ENCODE measurements at regions of chr1 and their contacts with region 1.

Region 1: GRCh38 chr1:107529502-107530149 is 388.8 kb downstream of the NTNG1 start:
- DNase-seq: peak; percentile 32
- H3K4me3 ChIP-seq: no peak overlapping the region
- H3K27ac ChIP-seq: no peak overlapping the region
- H3K4me1 ChIP-seq: no peaks in the 10 kb centered on the region
- H3K27me3 ChIP-seq: no peaks in the 10 kb centered on the region
- CTCF ChIP-seq: peak; percentile 58

Region 2: DNA sequence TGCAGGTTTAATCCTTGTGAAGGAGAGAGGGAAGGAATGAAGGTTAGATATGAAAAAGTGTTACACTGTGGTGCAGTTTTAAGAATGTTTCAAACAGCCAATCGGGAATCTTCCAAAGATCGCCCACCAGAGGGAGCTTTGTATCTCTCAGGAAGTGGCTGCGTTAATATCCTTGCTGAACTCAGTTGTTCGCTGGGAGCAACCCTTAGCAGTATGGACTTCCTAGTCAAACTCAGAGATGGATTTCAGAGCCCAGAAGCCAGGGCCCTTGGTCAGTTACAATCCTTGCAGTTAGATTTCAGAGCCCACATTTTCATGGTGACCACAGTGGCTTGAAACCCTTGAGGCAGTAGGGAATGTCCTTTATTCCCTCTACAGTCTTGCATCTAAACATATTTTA is 252.6 kb before region 1 on chr1:
- intact Hi-C with region 1: loop called (anchors 5 kb)
- DNase-seq: peak; percentile 41
- H3K4me3 ChIP-seq: no peak overlapping the region
- H3K27ac ChIP-seq: no peak overlapping the region
- H3K4me1 ChIP-seq: no peaks in the 10 kb centered on the region
- H3K27me3 ChIP-seq: no peaks in the 10 kb centered on the region
- CTCF ChIP-seq: peak; percentile 29

Region 3: DNA sequence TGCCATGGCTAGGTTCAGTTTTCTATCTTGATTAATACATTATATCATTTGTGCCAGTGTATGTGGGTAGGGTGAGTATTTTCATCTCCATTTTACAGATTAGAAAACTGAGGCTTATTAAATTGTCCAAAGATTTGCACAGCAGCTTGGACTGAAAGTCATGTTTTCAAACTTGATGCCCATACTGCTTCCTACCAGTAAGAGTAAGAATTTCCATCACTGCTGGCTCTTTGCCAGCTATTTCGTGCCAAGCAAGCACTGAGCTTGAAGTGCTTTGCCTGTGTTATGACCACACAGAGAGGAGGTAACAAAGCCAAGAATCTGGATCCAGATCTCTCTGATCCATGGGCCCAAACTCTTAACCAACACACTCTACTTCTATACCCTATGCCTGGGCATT is 140.4 kb after region 1 on chr1:
- intact Hi-C with region 1: loop called (anchors 10 kb)
- DNase-seq: peak; percentile 85
- H3K4me3 ChIP-seq: no peak overlapping the region
- H3K27ac ChIP-seq: peak overlapping the region; percentile 70
- H3K4me1 ChIP-seq: peaks cover 13% of the 10 kb centered on the region
- H3K27me3 ChIP-seq: no peaks in the 10 kb centered on the region
- CTCF ChIP-seq: no peak